PC-9 (cell line): ENCODE measurements at regions of chr19 and their contacts with region 1.

Region 1: GRCh38 chr19:45681391-45682015 is 10.2 kb downstream of the SNRPD2 start:
- DNase-seq: peak; percentile 80 to 94
- H3K4me3 ChIP-seq: peak overlapping the region; percentile 53
- H3K27ac ChIP-seq: peak overlapping the region; percentile 31; the same call in 1 of the 2 replicates
- H3K4me1 ChIP-seq: peaks cover 18% of the 10 kb centered on the region
- H3K27me3 ChIP-seq: no peaks in the 10 kb centered on the region
- CTCF ChIP-seq: peak; percentile 94

Region 2: DNA sequence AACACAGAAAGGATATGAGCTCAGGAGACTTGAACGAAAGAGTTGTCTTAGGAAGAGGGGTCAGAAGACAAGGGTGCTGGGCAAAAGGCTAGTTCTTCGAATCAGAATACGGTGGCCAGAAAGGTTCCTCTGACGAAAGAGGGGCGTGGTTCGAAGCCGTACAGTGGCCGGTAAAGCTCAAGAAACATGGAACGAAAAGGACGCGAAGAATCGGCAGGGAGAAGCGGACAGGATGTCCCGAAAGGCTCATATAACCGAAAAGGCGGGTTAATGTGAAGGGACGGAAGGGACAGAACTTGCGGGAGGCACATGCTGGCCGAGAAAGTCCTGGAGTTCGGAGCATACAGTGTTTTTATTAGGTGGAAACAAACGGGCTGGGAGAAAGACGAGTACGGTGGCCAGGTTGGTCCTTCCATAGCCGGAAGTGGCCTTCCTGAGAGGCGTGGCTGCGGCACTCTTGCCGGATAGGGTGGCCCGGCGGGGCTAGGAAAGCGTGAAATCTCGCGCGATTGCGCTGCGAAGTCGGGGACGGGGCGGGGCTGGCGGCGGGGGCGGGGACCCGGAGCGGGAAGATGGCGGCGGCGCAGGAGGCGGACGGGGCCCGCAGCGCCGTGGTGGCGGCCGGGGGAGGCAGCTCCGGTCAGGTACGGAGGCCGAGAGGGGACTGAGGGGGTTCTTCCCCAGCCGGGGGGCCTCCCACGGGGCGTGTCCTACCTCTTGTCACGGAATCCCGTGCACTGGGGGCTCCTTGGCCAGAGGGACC is 726.5 kb before region 1 on chr19 and contains the start of gene CLPTM1:
- CTCF ChIA-PET with region 1: no interaction called
- POLR2A ChIA-PET with region 1: interaction called, 18 read pairs
- intact Hi-C with region 1: no loop called
- DNase-seq: peak; percentile 93 to 94
- H3K4me3 ChIP-seq: peak within 1 kb of the TSS; percentile 89
- H3K27ac ChIP-seq: peak within 1 kb of the TSS; percentile 87
- H3K4me1 ChIP-seq: peaks cover 20% of the 10 kb centered on the region
- H3K27me3 ChIP-seq: no peaks in the 10 kb centered on the region
- CTCF ChIP-seq: no peak
- total RNA-seq, gene CLPTM1: 98.2 and 111 TPM in 2 replicates

Region 3: GRCh38 chr19:44988896-44989556 is 692.5 kb before region 1 on chr19:
- CTCF ChIA-PET with region 1: no interaction called
- POLR2A ChIA-PET with region 1: no interaction called
- intact Hi-C with region 1: no loop called
- DNase-seq: peak; percentile 38 to 49
- H3K4me3 ChIP-seq: no peak overlapping the region
- H3K27ac ChIP-seq: no peak overlapping the region
- H3K4me1 ChIP-seq: no peaks in the 10 kb centered on the region
- H3K27me3 ChIP-seq: no peaks in the 10 kb centered on the region
- CTCF ChIP-seq: peak; percentile 78

Region 4: GRCh38 chr19:45591004-45591637 is 90.4 kb before region 1 on chr19:
- CTCF ChIA-PET with region 1: interaction called, 6 read pairs
- POLR2A ChIA-PET with region 1: no interaction called
- intact Hi-C with region 1: loop called (anchors 2 kb)
- DNase-seq: peak; percentile 30 to 62
- H3K4me3 ChIP-seq: no peak overlapping the region
- H3K27ac ChIP-seq: no peak overlapping the region
- H3K4me1 ChIP-seq: no peaks in the 10 kb centered on the region
- H3K27me3 ChIP-seq: no peaks in the 10 kb centered on the region
- CTCF ChIP-seq: peak; percentile 49

Region 5: DNA sequence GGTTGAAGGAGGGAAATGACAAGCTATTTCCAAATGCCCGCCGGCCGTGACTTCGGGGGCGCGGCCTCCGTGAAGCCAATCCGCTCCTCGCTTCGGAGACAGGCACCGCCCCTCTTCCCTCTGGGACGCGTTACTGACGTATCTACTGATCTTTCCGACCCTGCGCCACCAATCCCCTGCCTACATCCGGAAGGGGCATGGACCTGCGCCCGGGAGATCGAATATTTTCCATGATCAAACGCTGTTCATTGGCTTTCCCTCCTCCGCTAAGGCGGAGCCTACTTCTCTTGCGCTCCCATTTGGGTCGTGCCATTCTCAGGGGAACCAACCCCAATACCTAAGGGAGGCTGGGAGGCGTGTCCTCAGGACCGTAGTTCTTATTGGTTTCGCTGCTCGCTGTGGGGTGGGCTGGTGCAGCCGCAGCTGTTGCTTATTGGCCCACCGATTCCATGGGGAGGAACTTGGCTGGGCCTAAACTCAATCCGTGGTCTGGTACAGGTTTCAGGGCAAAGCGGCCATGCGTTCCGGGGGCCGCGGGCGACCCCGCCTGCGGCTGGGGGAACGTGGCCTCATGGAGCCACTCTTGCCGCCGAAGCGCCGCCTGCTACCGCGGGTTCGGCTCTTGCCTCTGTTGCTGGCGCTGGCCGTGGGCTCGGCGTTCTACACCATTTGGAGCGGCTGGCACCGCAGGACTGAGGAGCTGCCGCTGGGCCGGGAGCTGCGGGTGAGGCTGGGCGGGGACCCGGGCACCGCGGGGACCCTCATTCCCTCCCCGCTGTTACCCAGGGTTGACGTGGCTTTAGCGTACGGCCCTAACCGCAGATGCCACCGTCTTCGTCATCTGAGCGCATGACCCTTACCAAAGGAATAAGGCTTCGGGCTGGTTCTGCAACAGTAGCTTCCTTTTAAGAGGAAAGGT is 10.9 kb after region 1 on chr19 and contains the start of gene QPCTL:
- CTCF ChIA-PET with region 1: interaction called, 10 read pairs
- POLR2A ChIA-PET with region 1: interaction called, 11 read pairs
- intact Hi-C with region 1: loop called (anchors 2 kb)
- DNase-seq: peak; percentile 97 to 100
- H3K4me3 ChIP-seq: peak within 1 kb of the TSS; percentile 80
- H3K27ac ChIP-seq: peak within 1 kb of the TSS; percentile 72
- H3K4me1 ChIP-seq: peaks cover 11% of the 10 kb centered on the region
- H3K27me3 ChIP-seq: no peaks in the 10 kb centered on the region
- CTCF ChIP-seq: no peak
- total RNA-seq, gene QPCTL: 27.6 and 42.8 TPM in 2 replicates

Region 6: DNA sequence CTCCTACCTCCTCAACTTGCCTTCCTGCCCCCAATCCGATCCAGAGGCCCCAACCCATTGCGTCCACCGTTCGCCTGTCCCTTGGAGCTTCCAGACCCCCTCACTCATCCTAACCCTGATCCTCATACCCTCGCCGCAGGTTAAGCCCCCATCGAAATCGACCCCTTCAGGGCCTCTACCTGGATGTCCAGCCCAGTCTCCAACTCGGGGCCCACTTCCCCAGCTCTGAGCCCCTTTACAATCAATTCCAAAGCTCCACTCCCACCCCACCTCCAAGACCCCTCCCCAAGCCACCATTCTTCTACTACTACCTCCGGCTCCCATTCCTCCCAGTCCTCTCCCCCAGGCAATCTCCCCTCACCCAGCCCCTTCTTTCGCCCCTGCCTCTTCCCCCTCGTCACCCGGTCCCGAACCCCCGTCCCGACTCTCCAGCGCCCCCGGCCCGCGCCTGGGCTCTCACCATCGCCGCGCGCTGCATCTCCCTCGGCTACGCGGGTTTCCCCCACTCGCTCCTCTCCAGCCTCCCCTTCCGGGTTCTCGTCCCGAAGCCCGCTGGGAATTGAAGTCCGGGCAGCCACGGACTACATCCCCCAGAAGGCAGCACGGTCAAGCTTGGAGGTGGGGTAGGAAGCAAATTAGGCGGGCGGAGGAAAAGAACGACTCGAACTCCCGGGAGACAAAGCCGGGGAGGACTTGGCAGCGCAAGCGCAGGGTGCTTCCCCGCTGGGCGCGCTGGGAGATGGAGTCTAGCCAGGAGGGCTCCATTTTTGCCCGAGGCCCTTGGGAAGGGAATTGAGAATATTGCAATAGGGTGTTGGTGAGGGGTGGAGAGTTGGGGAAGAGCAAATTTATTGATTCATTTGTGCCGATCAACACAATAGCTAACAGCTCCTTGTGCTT is 49.1 kb after region 1 on chr19 and contains the start of gene FBXO46:
- CTCF ChIA-PET with region 1: interaction called, 3 read pairs
- POLR2A ChIA-PET with region 1: interaction called, 16 read pairs
- intact Hi-C with region 1: no loop called
- DNase-seq: peak; percentile 94 to 97
- H3K4me3 ChIP-seq: peak within 1 kb of the TSS; percentile 93
- H3K27ac ChIP-seq: peak within 1 kb of the TSS; percentile 46
- H3K4me1 ChIP-seq: peaks cover 9% of the 10 kb centered on the region
- H3K27me3 ChIP-seq: no peaks in the 10 kb centered on the region
- CTCF ChIP-seq: no peak; the same call in 1 of the 2 replicates
- total RNA-seq, gene FBXO46: 33.3 and 45.5 TPM in 2 replicates

Region 7: GRCh38 chr19:45763691-45764294 is 82.3 kb after region 1 on chr19:
- CTCF ChIA-PET with region 1: no interaction called
- POLR2A ChIA-PET with region 1: no interaction called
- intact Hi-C with region 1: no loop called
- DNase-seq: no peak
- H3K4me3 ChIP-seq: no peak overlapping the region
- H3K27ac ChIP-seq: no peak overlapping the region
- H3K4me1 ChIP-seq: peaks cover 10% of the 10 kb centered on the region
- H3K27me3 ChIP-seq: no peaks in the 10 kb centered on the region
- CTCF ChIP-seq: no peak

Region 8: DNA sequence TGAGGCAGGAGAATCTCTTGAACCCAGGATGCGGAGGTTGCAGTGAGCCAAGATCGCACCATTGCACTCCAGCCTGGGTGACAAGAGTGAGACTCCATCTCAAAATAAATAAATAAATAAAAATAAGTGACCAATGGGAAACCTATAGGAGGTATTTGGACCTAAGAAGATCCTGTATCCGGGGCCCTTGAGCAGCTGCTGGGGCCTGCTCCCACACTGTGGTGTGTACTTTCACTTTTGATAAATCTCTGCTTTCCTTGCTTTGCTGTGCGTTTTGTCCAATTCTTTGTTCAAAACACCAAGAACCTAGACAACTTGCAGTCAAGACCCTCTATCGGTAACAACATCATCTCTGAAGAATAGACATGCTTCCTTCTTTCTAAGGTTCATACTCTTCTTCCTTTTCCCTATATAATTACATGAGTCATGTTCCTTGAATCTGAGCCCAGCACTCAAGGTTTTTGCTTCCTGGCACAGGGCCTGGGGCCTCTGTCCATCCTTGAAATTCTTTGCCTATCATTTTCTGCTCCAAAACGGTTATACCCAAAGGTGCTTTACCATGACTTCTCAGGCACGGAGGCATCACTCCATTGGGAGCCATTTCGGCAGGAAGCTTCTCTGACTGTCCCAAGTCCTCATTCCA is 761.4 kb after region 1 on chr19:
- CTCF ChIA-PET with region 1: no interaction called
- POLR2A ChIA-PET with region 1: no interaction called
- intact Hi-C with region 1: no loop called
- DNase-seq: peak; percentile 60 to 72
- H3K4me3 ChIP-seq: no peak overlapping the region
- H3K27ac ChIP-seq: no peak overlapping the region
- H3K4me1 ChIP-seq: peaks cover 10% of the 10 kb centered on the region
- H3K27me3 ChIP-seq: no peaks in the 10 kb centered on the region
- CTCF ChIP-seq: no peak